GM10248 (cell line): ENCODE measurements at regions of chr5 and their contacts with region 1.

Region 1: DNA sequence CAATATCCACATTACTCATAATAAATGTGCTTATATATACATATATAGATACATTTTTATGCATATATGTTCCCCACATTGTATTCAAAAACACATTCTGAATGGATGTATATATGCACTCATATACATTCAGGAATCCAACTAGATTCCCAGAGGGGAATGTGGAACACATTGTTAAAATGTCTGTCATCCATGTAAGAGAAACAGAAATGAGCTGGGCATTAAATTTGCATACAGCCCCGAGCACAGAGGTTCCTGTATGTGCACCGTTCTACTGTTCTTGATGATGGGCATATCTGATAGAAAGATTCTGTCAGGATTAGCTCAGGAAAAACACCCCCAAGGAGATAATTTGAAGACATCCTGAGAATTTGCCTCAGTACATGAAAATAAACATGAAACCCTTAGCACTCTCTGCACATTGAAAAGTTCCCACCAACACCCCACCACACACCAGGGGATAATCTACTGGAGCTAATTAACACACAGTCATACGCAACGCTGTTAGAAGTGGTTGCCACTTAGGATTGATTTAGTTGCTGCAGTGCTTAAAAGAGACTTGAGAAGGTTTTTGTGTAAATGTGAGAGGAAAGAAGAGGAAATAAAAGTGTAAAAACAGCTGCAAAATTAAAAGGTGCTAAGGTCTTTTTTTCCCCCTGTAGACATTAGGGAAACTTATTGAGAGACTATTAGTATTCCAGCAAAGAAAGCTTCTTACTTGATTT is 223.3 kb downstream of the SLF1 start:
- DNase-seq: no peak
- CTCF ChIP-seq: no peak

Region 2: DNA sequence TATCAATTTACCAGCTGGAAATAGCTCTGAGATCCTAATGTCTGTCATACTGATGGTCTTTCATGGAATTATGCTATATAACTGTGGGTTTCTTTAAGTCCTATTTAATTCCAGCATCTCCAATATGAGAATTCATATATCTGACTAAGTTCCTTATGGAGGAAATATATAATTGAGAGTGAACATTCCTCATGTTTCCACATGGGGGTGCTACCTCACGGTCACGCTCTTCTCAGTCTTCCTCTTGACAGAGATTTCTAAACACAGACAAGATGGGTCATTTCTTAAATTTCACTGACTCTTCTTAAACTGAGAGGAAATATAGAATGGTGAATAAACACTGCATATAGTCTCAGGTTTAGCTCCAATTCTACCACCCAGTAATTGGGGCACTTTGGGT is 11.2 kb before region 1 on chr5:
- CTCF ChIA-PET with region 1: interaction called, 34 read pairs
- POLR2A ChIA-PET with region 1: no interaction called
- DNase-seq: no peak
- CTCF ChIP-seq: peak; percentile 12